ENCODE measurements at regions of chr19 and their contacts with region 1.

Region 1: DNA sequence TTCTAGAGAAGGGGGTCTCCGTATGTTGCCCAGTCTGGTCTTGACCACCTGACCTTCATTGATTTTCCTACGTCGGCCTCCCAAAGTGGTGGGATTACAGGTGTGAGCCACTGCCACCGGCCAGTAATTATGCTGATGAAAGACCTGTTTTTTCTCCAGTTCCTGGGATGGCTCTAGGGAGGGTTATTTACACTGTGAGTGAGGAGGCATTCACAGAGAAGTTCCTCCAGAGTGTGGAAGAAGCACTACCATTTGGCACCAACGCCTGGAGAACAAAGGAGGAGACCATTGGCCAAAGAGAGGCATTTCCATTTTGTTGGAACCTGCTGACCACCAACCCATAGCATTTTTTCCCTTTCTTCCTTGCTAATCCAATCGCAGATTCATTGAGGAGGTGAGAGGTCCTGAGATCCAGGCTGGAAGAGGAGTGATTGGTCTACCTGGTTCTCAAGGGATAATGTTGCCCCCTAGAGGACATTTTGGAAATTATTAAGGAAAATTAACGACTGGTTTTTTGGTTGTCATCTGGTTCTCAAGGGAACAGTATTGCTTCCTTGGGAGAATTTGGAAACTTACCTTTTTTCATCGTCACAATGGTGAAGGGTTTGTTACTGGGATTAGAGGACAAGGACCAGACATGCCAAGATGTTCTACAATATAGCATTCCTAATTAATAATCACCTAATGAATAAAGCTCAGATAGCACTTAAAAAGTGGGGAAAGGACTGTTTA is 5.5 kb upstream of the SAE1 start:
- DNase-seq: peak; percentile 80
- ATAC-seq: peak; percentile 70
- H3K4me3 ChIP-seq: no peak overlapping the region
- H3K4me3 Mint-ChIP-seq: no peak overlapping the region
- H3K27ac ChIP-seq: no peak overlapping the region
- H3K27ac Mint-ChIP-seq: no peak overlapping the region
- H3K4me1 ChIP-seq: peaks cover 0 to 1% of the 10 kb centered on the region in 2 donors
- H3K4me1 Mint-ChIP-seq: peaks cover 2% of the 10 kb centered on the region
- H3K27me3 ChIP-seq: no peaks in the 10 kb centered on the region
- H3K27me3 Mint-ChIP-seq: peaks cover 3% of the 10 kb centered on the region
- CTCF ChIP-seq: peak; percentile 81

Region 2: DNA sequence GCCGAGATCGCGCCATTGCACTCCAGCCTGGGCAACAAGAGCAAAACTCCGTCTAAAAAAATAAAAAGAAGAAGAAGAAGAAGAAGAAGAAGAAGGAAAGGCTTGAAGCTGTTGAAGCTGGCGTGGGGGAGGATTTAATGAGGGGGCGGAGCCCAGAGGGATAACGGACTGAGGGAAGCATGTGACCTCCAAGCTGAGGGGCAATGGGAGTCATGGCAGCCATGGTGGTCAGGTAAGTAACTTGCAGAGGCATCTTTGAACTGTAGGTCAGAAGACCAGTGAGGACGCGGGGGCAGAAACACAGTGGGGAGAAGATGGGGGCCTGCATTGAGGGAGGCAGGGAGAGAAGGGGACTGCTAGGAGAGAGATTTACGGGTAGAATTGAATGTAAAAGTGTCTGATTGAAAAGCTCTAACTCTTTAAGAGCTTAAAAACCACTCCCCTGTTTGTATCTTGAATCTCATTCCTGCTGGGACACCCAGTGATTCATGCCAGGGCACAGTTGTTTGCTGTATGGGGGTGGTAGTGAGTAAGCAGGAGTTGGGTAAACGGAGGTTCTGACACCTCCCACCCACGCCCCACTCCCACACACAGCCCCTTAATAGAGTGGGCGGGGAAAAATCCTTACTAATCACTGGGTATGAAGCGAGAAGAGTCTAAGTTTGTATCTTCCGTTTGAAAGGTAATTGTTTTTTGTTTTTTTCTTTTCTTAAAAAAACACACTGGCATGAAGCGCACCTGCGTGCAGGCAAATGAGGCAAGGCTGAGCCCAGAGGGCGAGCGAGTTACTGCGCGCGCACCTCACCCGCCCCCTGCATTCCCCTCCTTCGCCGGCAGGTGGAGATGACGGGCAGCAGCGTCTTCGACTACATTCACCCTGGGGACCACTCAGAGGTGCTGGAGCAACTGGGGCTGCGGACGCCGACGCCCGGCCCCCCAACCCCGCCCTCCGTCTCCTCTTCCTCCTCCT is 89.7 kb before region 1 on chr19:
- CTCF ChIA-PET with region 1: interaction called, 19 read pairs
- POLR2A ChIA-PET with region 1: interaction called, 3 read pairs
- intact Hi-C with region 1: loop called (anchors 1 kb)
- DNase-seq: peak; percentile 97
- ATAC-seq: peak; percentile 98
- H3K4me3 ChIP-seq: peak overlapping the region; percentile 36 to 69 (median 56)
- H3K4me3 Mint-ChIP-seq: peak overlapping the region; percentile 93
- H3K27ac ChIP-seq: no peak overlapping the region
- H3K27ac Mint-ChIP-seq: peak overlapping the region; percentile 80
- H3K4me1 ChIP-seq: peaks cover 18 to 19% of the 10 kb centered on the region in 2 donors
- H3K4me1 Mint-ChIP-seq: peaks cover 20% of the 10 kb centered on the region
- H3K27me3 ChIP-seq: peaks cover 0 to 20% (median 1%) of the 10 kb centered on the region in 4 experiments
- H3K27me3 Mint-ChIP-seq: peaks cover 13% of the 10 kb centered on the region
- CTCF ChIP-seq: peak; percentile 97

Region 3: GRCh38 chr19:47075179-47075810 is 49.8 kb before region 1 on chr19:
- CTCF ChIA-PET with region 1: interaction called, 152 read pairs
- POLR2A ChIA-PET with region 1: interaction called, 3 read pairs
- intact Hi-C with region 1: no loop called
- DNase-seq: no peak
- ATAC-seq: no peak
- H3K4me3 ChIP-seq: no peak overlapping the region
- H3K4me3 Mint-ChIP-seq: no peak overlapping the region
- H3K27ac ChIP-seq: no peak overlapping the region
- H3K27ac Mint-ChIP-seq: peak overlapping the region; percentile 54
- H3K4me1 ChIP-seq: no peaks in the 10 kb centered on the region
- H3K4me1 Mint-ChIP-seq: peaks cover 4% of the 10 kb centered on the region
- H3K27me3 ChIP-seq: no peaks in the 10 kb centered on the region
- H3K27me3 Mint-ChIP-seq: no peaks in the 10 kb centered on the region
- CTCF ChIP-seq: no peak

Region 4: DNA sequence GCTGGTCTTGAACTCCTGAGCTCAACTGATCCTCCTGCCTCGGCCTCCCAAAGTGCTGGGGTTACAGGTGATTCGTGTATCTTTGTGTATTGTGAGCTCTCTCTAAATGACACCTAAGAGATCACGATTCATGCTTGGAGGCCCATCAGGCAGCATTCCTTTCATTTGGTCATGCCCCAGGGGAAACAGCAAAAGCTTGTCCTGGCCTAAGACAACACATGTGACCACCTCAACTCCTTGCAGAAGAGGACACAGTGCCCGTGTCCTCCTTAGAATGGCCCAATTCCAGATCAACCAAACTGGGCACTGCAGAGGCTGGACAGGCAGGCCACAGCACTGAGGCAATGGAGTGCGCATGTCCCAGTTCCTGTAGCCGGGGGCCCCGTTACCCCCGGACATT is 44.0 kb before region 1 on chr19:
- CTCF ChIA-PET with region 1: interaction called, 152 read pairs
- POLR2A ChIA-PET with region 1: interaction called, 3 read pairs
- intact Hi-C with region 1: no loop called
- DNase-seq: no peak
- ATAC-seq: no peak
- H3K4me3 ChIP-seq: no peak overlapping the region
- H3K4me3 Mint-ChIP-seq: no peak overlapping the region
- H3K27ac ChIP-seq: no peak overlapping the region
- H3K27ac Mint-ChIP-seq: no peak overlapping the region
- H3K4me1 ChIP-seq: peaks cover 0 to 9% of the 10 kb centered on the region in 2 donors
- H3K4me1 Mint-ChIP-seq: peaks cover 5% of the 10 kb centered on the region
- H3K27me3 ChIP-seq: no peaks in the 10 kb centered on the region
- H3K27me3 Mint-ChIP-seq: no peaks in the 10 kb centered on the region
- CTCF ChIP-seq: no peak

Region 5: GRCh38 chr19:47102346-47103060 is 22.6 kb before region 1 on chr19:
- CTCF ChIA-PET with region 1: interaction called, 11 read pairs
- POLR2A ChIA-PET with region 1: no interaction called
- intact Hi-C with region 1: no loop called
- DNase-seq: no peak
- ATAC-seq: no peak
- H3K4me3 ChIP-seq: no peak overlapping the region
- H3K4me3 Mint-ChIP-seq: no peak overlapping the region
- H3K27ac ChIP-seq: peak overlapping the region in 1 of 2 donors; percentile 23
- H3K27ac Mint-ChIP-seq: peak overlapping the region; percentile 4
- H3K4me1 ChIP-seq: peaks cover 11% of the 10 kb centered on the region in 2 donors
- H3K4me1 Mint-ChIP-seq: peaks cover 46% of the 10 kb centered on the region
- H3K27me3 ChIP-seq: no peaks in the 10 kb centered on the region
- H3K27me3 Mint-ChIP-seq: no peaks in the 10 kb centered on the region
- CTCF ChIP-seq: no peak

Region 6: DNA sequence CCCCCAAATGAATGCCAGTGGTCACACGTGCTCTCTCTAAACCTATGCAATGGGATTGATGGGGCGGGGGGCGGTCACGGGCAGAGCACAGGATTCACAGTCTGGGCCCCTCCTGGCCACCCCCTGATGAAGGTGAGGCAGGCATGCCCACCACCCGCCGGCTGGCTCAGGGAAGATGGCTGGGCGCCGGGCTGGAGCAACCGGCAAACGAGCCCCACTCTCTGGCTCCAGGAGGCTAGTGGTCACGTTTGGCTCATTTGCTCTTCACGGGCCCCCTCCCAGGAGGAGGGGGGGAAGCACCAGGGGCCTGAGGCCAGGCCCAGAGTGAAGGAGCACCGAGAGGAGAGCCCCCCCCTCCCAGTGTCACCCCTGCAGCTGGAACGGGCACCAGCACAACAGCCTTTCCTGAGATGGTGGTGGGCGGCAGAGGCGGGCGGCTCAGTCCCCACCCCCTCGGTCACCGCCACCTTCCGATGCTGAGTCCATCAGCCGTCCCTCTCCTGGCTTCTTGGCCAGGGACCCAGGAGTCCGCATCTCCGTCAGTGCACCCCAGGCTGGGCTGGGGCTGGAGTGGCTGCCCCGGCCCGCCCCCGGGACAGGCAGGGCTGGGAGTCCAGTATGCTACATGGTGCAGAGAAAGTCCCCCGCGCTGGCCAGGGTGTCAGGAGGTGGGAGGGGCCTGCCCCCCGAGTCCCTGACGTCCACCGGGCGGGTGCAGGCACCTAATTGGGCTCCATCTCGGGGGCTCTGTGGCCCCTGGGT is 96.2 kb after region 1 on chr19:
- CTCF ChIA-PET with region 1: no interaction called
- POLR2A ChIA-PET with region 1: no interaction called
- intact Hi-C with region 1: no loop called
- DNase-seq: no peak
- ATAC-seq: no peak
- H3K4me3 ChIP-seq: no peak overlapping the region
- H3K4me3 Mint-ChIP-seq: no peak overlapping the region
- H3K27ac ChIP-seq: no peak overlapping the region
- H3K27ac Mint-ChIP-seq: no peak overlapping the region
- H3K4me1 ChIP-seq: peaks cover 5 to 7% of the 10 kb centered on the region in 2 donors
- H3K4me1 Mint-ChIP-seq: peaks cover 4% of the 10 kb centered on the region
- H3K27me3 ChIP-seq: no peaks in the 10 kb centered on the region
- H3K27me3 Mint-ChIP-seq: no peaks in the 10 kb centered on the region
- CTCF ChIP-seq: no peak